Calu3 (cell line): ENCODE measurements at regions of chr10 and their contacts with region 1.

Region 1: GRCh38 chr10:77147871-77148270 is 489.7 kb downstream of the KCNMA1 start:
- DNase-seq: no peak
- H3K4me3 Mint-ChIP-seq: no peak overlapping the region
- H3K27ac Mint-ChIP-seq: no peak overlapping the region
- H3K4me1 Mint-ChIP-seq: no peaks in the 10 kb centered on the region
- H3K27me3 Mint-ChIP-seq: peaks cover 64% of the 10 kb centered on the region
- CTCF ChIP-seq: no peak

Region 2: DNA sequence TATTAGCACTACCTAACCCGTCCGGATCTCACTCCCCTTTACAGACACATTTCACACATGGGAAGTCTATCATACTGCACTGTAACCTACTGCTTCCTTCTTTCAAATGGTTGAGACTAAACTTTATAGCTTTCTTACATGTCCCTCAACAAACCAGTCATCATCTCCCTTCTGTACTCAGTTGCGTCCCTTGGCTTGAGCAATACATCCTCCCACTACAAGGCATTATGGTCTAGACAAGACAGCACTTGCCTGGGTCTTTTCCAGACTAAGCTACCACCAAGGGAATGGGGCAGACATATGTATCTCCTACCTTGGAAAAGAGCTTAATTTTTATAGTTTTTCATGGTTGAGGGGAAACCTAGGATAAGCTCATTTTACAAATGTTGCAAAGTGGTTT is 85.5 kb before region 1 on chr10:
- CTCF ChIA-PET with region 1: no interaction called
- intact Hi-C with region 1: no loop called
- DNase-seq: no peak
- H3K4me3 Mint-ChIP-seq: no peak overlapping the region
- H3K27ac Mint-ChIP-seq: no peak overlapping the region
- H3K4me1 Mint-ChIP-seq: no peaks in the 10 kb centered on the region
- H3K27me3 Mint-ChIP-seq: peaks cover 58% of the 10 kb centered on the region
- CTCF ChIP-seq: no peak

Region 3: GRCh38 chr10:77090381-77091356 is 57.2 kb before region 1 on chr10:
- CTCF ChIA-PET with region 1: interaction called, 12 read pairs
- intact Hi-C with region 1: no loop called
- DNase-seq: no peak
- H3K4me3 Mint-ChIP-seq: no peak overlapping the region
- H3K27ac Mint-ChIP-seq: no peak overlapping the region
- H3K4me1 Mint-ChIP-seq: no peaks in the 10 kb centered on the region
- H3K27me3 Mint-ChIP-seq: peaks cover 82% of the 10 kb centered on the region
- CTCF ChIP-seq: no peak